Spleen (tissue), 13 donors: ENCODE measurements at regions of chr10 and their contacts with region 1.

Region 1: DNA sequence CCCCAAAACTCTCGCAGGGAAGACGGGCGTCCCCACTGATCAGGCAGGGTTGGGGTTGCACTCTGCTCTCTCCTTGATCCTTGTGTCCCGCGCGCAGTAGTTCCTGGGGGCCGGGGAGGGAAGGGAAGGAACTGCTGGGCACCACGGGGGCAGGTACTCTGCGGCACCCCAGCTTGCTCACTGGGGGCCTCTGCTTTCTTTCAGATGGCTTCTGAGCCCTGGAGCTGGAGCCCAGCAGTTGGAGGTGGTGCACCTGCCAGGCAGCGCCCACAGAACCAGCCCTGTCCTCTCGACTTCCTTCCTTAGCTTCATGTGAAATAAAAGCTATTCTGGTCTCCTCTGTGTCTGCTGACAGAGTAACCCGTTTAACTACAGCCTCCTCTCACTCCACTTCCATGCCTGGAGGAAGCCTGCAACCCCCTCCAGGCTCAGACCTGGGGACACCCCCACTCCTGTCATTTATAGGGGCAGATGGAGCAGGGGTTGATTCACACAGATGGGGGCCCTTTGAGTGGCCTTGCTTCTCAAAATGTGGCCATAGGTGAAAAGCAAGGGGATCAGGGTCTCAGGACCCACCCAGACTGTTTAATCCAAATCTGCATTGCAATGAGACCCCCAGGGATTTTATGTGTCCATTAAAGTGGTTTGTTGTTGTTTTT is 12.3 kb downstream of the PLAC9 start:
- DNase-seq: peak; percentile 79
- H3K4me3 ChIP-seq: peak overlapping the region in 3 of 8 donors; percentile 10 to 55 (median 25)
- H3K27ac ChIP-seq: peak overlapping the region in 3 of 8 donors; percentile 13 to 48 (median 42)
- H3K4me1 ChIP-seq: peaks cover 8 to 25% (median 18%) of the 10 kb centered on the region in 6 donors
- H3K27me3 ChIP-seq: peaks cover 0 to 28% (median 0%) of the 10 kb centered on the region in 7 donors
- CTCF ChIP-seq: no peak
- POLR2A ChIP-seq: no peak

Region 2: DNA sequence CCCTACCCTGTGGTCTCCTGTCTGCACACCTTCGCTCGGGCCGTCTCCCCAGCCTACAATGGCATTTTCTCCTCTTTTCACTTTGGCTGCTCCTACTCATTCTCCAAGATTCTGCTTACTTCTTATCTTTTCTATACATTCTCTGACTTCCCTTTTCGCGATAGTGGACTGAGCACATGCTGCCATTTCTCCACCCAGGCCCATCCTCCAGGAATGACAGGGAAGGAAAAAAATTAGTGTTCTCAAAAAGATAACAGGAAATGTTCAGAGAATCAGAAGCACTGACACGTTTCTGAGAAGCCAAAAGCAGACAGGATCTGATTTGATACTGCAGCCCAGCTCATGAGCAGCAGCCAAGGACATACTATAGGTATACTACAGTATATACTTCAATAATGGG is 67.0 kb after region 1 on chr10:
- intact Hi-C with region 1: loop called (anchors 5 kb)
- DNase-seq: no peak
- H3K4me3 ChIP-seq: no peak overlapping the region
- H3K27ac ChIP-seq: no peak overlapping the region
- H3K4me1 ChIP-seq: peaks cover 0 to 12% (median under 1%) of the 10 kb centered on the region in 6 donors
- H3K27me3 ChIP-seq: no peaks in the 10 kb centered on the region
- CTCF ChIP-seq: no peak
- POLR2A ChIP-seq: no peak

Region 3: DNA sequence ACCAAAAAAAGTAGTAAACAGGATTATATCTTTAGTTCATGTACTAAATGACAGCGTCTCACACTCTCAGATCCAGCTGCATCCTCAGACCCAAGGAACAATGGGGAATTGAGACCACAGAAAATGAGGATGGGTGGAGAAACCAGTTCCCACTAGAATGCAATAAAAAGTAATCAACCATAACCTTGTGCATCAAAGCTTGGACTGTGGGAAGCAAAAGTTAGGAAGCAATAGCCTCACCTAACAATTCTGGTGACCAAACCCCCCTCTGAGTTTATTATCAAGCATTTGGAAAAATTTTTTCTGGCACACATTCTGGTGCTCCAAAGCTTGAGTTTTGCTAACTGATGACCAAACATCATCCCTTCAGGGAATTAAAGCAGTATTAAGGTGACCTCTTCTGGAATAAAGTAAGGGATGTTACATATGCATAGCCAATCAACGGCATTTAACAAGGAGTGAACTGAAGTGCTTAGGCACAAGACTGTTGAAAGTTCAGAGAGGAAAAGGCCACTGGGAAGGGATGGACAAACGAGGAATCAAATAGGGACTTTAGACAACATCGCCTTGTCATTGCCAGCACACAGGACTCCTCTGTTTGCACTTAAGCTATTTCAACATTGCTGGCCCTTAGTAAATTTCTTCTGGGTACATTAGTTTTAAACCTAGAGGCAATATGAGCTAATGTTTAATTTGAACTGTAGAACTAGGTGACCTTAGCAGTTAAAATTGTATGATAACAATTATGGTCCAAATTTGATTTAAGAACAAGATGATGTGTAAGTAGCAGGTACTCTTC is 145.8 kb after region 1 on chr10:
- intact Hi-C with region 1: no loop called
- DNase-seq: no peak
- H3K4me3 ChIP-seq: no peak overlapping the region
- H3K27ac ChIP-seq: no peak overlapping the region
- H3K4me1 ChIP-seq: no peaks in the 10 kb centered on the region
- H3K27me3 ChIP-seq: peaks cover 0 to 8% (median 0%) of the 10 kb centered on the region in 7 donors
- CTCF ChIP-seq: no peak
- POLR2A ChIP-seq: no peak

Region 4: GRCh38 chr10:80324086-80324485 is 179.3 kb after region 1 on chr10:
- intact Hi-C with region 1: no loop called
- DNase-seq: no peak
- H3K4me3 ChIP-seq: no peak overlapping the region
- H3K27ac ChIP-seq: no peak overlapping the region
- H3K4me1 ChIP-seq: no peaks in the 10 kb centered on the region
- H3K27me3 ChIP-seq: peaks cover 0 to 9% (median 0%) of the 10 kb centered on the region in 7 donors
- CTCF ChIP-seq: no peak
- POLR2A ChIP-seq: no peak